BJ (cell line): ENCODE measurements at regions of chr3 and their contacts with region 1.

Region 1: DNA sequence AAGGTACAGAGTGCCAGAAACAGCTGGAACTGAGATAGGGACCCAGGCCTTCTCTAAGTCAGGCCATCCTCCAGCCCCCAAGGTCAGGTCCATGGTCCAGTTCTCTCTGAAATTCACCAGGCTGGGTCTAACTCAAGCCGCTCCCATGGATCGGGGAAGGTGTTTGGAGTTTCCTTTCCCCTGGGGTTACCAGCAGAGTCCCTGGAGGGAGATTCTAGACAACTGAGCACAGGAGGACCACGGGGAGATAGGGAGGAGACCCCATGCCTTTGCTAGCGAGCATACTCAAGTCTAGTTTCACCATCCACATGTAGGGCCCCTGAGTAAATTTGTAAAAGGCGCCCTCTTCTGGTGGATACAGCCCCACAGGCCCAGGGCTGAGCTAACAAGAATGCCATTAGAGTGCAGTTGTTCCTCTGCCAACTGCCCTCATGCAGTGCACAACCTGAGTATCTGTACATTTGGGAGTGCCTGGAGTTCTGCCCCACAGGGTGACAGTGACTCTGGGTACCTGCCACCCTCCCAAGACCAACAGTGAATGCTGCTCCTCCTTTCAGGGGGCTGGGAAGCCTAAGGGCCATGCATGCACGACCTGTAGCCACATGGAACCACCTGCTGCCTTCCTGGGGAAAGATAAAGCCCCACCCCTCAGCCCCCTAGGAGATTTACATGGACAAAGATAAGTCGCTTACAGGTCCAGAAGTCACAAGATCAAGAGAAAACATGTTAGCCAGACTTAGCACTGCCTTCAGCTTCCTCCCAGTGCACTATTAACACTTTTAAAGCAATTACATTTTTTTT is 89.0 kb downstream of the IQSEC1 start:
- DNase-seq: no peak
- H3K4me3 ChIP-seq: no peak overlapping the region
- H3K27me3 ChIP-seq: no peaks in the 10 kb centered on the region
- CTCF ChIP-seq: peak; percentile 86

Region 2: GRCh38 chr3:12822725-12823373 is 161.4 kb before region 1 on chr3:
- CTCF ChIA-PET with region 1: no interaction called
- POLR2A ChIA-PET with region 1: no interaction called
- DNase-seq: no peak
- H3K4me3 ChIP-seq: no peak overlapping the region
- H3K27me3 ChIP-seq: no peaks in the 10 kb centered on the region
- CTCF ChIP-seq: peak; percentile 45

Region 3: GRCh38 chr3:12868039-12869034 is 115.9 kb before region 1 on chr3:
- CTCF ChIA-PET with region 1: interaction called, 11 read pairs
- POLR2A ChIA-PET with region 1: no interaction called
- DNase-seq: no peak
- H3K4me3 ChIP-seq: no peak overlapping the region
- H3K27me3 ChIP-seq: peaks cover 2% of the 10 kb centered on the region; the same call in 1 of the 2 replicates
- CTCF ChIP-seq: peak; percentile 92

Region 4: DNA sequence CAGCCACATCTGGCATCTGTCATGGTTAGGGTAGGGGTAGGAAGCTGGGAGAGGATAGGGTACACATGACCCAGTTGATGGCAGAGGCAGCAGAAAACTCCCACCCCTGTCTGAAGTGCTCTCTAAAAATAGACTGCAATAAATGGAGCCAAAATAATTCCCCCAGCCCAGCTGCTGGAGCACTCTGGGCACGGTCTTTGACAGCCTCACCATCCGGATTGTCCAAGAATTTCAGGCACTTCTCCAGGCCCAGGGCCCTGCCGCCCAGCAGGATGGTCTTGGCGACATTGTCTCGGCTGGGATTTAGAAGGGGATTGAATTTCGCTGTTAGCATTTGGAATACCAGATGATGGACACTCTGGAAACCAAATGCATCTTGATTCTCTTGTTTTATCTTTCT is 14.7 kb before region 1 on chr3:
- CTCF ChIA-PET with region 1: interaction called, 75 read pairs
- POLR2A ChIA-PET with region 1: no interaction called
- DNase-seq: no peak
- H3K4me3 ChIP-seq: no peak overlapping the region
- H3K27me3 ChIP-seq: no peaks in the 10 kb centered on the region; the same call in 1 of the 2 replicates
- CTCF ChIP-seq: no peak

Region 5: DNA sequence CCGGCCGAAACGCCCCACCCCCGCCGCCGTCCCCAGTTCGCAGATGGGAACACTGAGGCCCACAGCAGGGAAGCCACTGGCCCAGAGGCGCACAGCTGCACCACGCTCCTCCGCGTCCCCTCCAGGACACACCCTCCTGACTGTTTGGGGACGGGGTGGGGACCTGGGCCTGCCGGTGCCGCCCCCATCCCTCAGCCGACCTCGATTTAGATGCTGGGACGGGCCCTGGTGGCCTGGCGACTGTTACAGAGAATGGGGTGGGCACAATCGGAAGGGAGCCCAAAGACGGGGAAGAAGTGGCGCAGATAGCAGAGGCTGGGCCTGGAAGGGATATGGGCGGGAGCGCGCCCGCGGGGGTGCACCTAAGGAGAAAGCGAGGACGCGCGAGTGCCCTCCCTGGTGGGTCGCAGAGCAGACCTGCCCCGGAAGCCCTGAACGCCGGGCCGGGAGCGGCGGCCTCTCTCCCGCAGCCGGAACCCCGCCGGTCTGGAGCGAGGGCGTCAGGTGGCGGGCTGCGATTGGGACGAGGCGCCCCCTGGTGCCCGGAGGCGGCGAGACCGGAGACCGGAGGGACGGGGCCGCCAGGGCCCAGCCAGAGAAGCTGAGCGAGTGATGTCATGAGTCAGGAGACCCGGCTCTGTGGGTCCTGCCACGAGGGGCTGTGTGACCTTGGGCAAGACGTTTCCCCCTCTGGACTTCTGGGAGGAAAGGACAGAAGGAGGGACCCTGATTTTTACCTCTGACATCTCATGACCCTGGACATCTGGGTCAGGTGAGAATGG is 10.6 kb after region 1 on chr3:
- CTCF ChIA-PET with region 1: interaction called, 38 read pairs
- POLR2A ChIA-PET with region 1: no interaction called
- DNase-seq: peak; percentile 34
- H3K4me3 ChIP-seq: peak overlapping the region; percentile 76
- H3K27me3 ChIP-seq: no peaks in the 10 kb centered on the region
- CTCF ChIP-seq: peak; percentile 85

Region 6: GRCh38 chr3:13027154-13027553 is 42.9 kb after region 1 on chr3:
- CTCF ChIA-PET with region 1: no interaction called
- POLR2A ChIA-PET with region 1: no interaction called
- DNase-seq: no peak
- H3K4me3 ChIP-seq: no peak overlapping the region
- H3K27me3 ChIP-seq: peaks cover 1% of the 10 kb centered on the region; the same call in 1 of the 2 replicates
- CTCF ChIP-seq: no peak